ENCODE measurements at regions of chr17 and their contacts with region 1.

Region 1: DNA sequence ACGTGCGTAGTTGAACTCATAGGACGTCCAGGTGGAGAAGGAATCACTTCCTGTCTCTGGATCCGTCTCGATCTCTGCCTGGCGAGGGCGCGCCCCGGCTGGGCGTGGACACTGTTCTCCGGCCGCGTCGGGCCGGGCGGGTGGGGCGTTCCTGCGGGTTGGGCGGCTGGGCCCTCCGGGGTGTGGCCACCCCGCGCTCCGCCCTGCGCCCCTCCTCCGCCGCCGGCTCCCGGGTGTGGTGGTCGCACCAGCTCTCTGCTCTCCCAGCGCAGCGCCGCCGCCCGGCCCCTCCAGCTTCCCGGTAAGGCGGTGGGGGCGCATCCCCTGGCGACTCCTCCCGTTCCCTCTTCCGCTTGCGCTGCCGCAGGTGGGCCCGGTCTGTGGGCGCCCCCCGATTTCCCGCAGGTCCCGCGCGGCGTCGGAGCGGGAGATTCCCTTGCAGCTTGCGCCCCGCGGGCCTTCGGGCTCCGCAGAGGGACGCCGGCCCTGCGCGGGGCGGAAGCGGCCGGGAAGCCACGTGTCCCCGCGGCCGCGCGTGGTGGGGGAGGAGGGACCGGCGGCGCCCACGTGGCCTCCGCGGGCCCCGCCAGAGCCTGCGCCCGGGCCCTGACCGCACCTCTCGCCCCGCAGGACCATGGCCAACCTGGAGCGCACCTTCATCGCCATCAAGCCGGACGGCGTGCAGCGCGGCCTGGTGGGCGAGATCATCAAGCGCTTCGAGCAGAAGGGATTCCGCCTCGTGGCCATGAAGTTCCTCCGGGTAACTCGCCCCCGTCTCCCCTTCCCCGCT is at the start of gene NME2:
- DNase-seq: peak; percentile 40
- ATAC-seq: peak; percentile 93
- H3K4me3 ChIP-seq: peak within 1 kb of the TSS; percentile 96
- H3K27ac ChIP-seq: peak within 1 kb of the TSS; percentile 92
- H3K4me1 ChIP-seq: peaks cover 12% of the 10 kb centered on the region
- H3K27me3 ChIP-seq: no peaks in the 10 kb centered on the region
- CTCF ChIP-seq: no peak; a peak in 1 of 6 replicates
- EP300 ChIP-seq: no peak
- POLR2A ChIP-seq: peak; percentile 69
- RAD21 ChIP-seq: no peak
- polyA plus RNA-seq, gene NME2: 497 to 881 TPM

Region 2: DNA sequence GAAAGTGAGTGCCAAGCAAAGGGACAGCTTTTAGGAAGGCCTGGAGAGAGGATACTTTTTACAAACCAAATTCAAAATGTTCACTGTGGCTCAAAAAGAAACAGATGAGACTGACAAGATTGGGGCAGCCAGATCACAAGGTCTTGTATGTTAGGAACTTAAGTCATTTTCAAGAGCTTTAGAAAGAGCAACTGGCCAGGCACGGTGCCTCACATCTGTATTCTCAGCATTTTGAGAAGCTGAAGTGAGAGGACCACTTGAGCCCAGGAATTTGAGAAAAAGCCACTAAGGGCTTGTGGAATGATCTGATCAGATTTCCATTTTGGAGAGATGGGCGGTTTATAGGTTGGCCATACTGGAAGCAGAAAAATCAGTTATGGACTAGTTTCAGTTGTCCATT is 62.9 kb before region 1 on chr17:
- CTCF ChIA-PET with region 1: no interaction called
- POLR2A ChIA-PET with region 1: no interaction called
- RAD21 ChIA-PET with region 1: no interaction called
- SMC1A ChIA-PET with region 1: no interaction called
- in situ Hi-C with region 1: loop called (anchors 10 kb)
- intact Hi-C with region 1: no loop called
- DNase-seq: no peak
- ATAC-seq: no peak
- H3K4me3 ChIP-seq: no peak overlapping the region
- H3K27ac ChIP-seq: no peak overlapping the region
- H3K4me1 ChIP-seq: no peaks in the 10 kb centered on the region
- H3K27me3 ChIP-seq: no peaks in the 10 kb centered on the region
- CTCF ChIP-seq: no peak
- EP300 ChIP-seq: no peak
- POLR2A ChIP-seq: no peak
- RAD21 ChIP-seq: no peak

Region 3: DNA sequence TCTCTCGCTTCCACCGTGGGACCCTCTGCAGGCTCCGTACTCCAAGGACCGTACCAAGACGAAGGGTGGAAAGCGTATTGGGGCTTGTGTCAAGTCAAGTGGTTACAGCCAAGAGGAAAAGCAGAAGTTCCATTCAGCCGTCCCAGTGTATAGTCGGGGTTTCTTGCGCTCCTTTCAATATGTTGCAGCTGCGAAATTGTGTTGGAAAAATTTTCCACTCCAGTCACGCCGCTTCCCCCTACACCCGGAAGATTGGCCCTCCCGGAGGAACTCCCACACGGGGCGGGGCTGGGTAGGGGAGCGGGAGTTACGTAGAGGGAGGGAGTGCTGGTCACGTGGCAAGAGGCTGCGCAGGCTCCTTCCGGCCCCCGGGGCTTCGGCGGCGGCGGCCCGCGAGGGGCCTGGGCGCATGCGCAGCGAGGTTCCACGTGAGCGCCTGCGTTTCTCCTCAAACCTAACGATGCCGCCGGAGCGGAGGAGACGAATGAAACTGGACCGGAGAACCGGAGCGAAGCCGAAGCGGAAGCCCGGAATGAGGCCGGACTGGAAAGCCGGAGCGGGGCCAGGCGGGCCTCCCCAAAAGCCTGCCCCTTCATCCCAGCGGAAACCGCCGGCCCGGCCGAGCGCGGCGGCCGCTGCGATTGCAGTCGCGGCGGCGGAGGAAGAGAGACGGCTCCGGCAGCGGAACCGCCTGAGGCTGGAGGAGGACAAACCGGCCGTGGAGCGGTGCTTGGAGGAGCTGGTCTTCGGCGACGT is 93.9 kb after region 1 on chr17 and contains the start of gene UTP18:
- CTCF ChIA-PET with region 1: no interaction called
- POLR2A ChIA-PET with region 1: no interaction called
- RAD21 ChIA-PET with region 1: interaction called, 5 read pairs
- SMC1A ChIA-PET with region 1: interaction called, 3 read pairs
- in situ Hi-C with region 1: no loop called
- intact Hi-C with region 1: loop called (anchors 5 kb)
- DNase-seq: peak; percentile 89
- ATAC-seq: peak; percentile 77
- H3K4me3 ChIP-seq: peak within 1 kb of the TSS; percentile 92
- H3K27ac ChIP-seq: peak within 1 kb of the TSS; percentile 100
- H3K4me1 ChIP-seq: peaks cover 8% of the 10 kb centered on the region
- H3K27me3 ChIP-seq: no peaks in the 10 kb centered on the region
- CTCF ChIP-seq: no peak
- EP300 ChIP-seq: no peak
- POLR2A ChIP-seq: peak; percentile 61; the same call in 1 of the 2 replicates
- RAD21 ChIP-seq: no peak
- polyA plus RNA-seq, gene UTP18: 31.0 to 59.2 TPM